WTC11 (cell line): ENCODE measurements at regions of chr1 and their contacts with region 1.

Region 1: DNA sequence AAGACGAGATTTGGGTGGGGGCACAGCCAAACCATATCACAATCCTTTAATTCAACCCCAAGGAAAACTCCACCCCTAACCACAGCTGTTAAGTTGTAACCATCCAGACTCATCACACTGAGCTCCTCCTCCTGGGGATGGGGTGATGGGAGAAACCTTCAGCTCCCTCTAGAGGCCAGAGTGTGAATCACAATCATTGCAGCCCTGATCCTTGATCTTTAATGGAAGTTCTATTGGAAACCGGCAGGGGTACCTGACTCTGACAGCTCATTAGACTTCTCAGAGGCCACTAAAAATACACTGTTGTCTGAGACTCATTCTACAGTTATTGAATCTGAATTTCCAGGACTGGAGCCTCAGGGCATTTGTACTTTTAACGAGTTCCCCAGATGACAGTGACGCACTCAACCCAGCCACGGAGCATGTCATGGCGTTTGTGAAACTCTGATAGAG is 127.2 kb downstream of the IGSF21 start:
- DNase-seq: peak; percentile 77
- ATAC-seq: peak; percentile 82
- H3K4me3 Mint-ChIP-seq: no peak overlapping the region
- H3K27ac Mint-ChIP-seq: peak overlapping the region; percentile 86
- H3K4me1 Mint-ChIP-seq: peaks cover 78% of the 10 kb centered on the region
- H3K27me3 Mint-ChIP-seq: no peaks in the 10 kb centered on the region; the same call in 1 of the 2 replicates
- CTCF ChIP-seq: peak; percentile 73; the same call in 1 of the 2 replicates

Region 2: GRCh38 chr1:18079941-18080520 is 154.8 kb before region 1 on chr1:
- CTCF ChIA-PET with region 1: no interaction called
- POLR2A ChIA-PET with region 1: no interaction called
- DNase-seq: no peak
- ATAC-seq: no peak
- H3K4me3 Mint-ChIP-seq: no peak overlapping the region
- H3K27ac Mint-ChIP-seq: no peak overlapping the region
- H3K4me1 Mint-ChIP-seq: peaks cover 19% of the 10 kb centered on the region
- H3K27me3 Mint-ChIP-seq: peaks cover 3% of the 10 kb centered on the region
- CTCF ChIP-seq: no peak

Region 3: DNA sequence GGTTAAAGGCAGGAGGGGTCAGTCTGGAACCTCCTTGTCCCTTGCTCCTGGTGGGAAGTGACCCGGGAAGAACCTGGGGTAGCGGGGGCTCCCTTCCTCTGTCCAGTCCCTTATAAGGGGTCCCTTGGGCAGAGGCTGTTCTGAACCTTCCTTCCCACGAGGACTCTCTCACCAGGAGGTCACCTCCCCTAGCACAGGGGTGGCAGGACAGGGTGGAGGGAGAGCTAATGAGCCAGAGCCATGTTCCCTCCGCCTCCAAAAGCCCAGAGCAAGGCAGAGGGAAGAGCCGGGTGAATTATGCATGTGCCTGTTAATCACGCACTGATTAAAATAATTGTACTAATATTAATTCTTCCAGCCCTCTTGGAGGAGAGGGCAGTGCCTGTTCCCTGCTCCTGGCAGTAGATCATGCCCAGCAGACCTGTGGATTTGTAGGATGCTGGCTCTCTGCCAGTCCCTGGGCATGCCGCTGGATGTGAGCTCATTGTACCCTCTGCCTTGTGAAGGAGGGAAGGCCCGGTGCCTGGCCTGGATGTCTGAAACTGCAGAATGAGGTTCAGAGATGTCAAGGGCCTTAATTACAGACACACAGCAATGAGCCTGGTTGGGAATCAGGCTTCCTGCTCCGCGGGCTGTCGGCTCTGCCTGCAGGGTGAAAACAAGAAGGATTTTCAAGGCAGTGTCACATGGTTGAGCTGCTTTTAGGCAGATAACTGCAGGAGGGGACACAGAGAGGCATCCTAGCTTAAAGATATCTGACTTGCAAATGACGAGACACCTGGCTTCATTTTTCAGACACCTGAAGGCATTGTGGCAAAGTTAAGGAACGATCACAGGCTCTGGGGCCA is 59.1 kb before region 1 on chr1:
- CTCF ChIA-PET with region 1: interaction called, 21 read pairs
- POLR2A ChIA-PET with region 1: no interaction called
- DNase-seq: peak; percentile 30
- ATAC-seq: peak; percentile 74
- H3K4me3 Mint-ChIP-seq: no peak overlapping the region
- H3K27ac Mint-ChIP-seq: peak overlapping the region; percentile 93
- H3K4me1 Mint-ChIP-seq: peaks cover 55% of the 10 kb centered on the region
- H3K27me3 Mint-ChIP-seq: no peaks in the 10 kb centered on the region
- CTCF ChIP-seq: no peak

Region 4: DNA sequence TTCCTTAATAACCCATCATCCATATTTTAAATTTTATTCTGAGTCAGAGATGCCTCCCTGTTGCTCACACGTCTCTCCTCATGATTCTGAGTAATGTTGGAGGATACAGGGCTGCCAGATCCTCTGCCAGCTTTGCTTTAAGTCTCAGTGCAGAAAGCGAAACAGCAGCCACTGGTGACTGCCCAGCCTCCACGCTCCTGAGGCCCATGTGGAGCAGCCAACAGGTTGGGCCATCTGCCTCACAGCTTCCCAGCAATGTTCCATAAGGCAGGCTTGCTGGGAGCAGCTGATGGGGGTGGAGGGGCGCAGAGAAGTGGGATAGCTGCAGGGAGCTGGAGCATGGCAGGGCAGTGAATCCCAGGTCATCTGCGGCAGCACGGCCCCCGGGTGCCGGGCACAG is 23.1 kb before region 1 on chr1:
- CTCF ChIA-PET with region 1: interaction called, 21 read pairs
- POLR2A ChIA-PET with region 1: no interaction called
- DNase-seq: no peak
- ATAC-seq: no peak
- H3K4me3 Mint-ChIP-seq: no peak overlapping the region
- H3K27ac Mint-ChIP-seq: peak overlapping the region; percentile 45; the same call in 1 of the 2 replicates
- H3K4me1 Mint-ChIP-seq: peaks cover 44% of the 10 kb centered on the region
- H3K27me3 Mint-ChIP-seq: no peaks in the 10 kb centered on the region
- CTCF ChIP-seq: no peak

Region 5: DNA sequence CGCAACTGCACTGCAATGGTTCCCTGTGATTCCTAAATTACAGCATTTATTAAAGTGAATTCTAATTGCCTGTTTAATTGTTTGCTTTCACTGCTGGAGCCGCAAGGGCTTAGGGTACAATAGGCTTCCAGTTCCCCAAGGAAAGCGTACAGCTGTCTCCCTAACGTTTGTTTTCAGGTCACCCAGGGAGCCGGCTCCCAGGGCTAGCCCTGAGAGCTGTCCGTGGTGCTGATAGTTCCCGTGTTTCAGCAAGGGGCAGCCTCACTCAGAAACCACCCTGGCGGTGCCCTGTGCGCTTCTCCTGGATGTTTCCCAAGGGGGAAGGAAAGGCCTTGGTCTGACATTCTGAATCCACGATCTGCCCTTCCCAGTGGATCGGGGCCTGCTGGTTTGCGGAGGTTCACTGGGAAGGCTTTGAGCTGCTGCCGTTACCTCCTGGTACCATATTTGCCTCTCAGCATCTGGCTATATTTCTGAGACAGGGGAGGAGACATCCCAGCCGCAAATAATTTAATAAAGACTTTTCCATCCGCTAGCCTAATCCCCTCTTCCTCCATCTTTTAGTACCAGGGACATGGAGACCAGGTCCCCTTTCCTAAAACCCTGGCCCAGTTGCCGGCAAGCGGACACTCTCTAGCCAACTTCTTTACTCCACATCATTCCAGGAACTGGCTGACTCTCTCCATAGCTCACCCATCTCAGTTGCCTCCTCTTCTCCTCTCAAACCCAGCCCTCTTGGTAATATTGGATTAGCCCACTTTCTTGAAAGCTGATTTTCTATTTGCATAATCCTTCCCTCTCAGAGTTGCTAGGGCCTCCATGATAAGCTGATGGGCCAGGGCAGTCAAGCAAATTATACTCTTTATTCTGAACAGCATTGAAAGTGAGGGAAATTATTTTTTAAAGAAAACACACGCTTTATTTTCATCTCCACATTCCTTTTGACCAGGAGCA is 21.7 kb after region 1 on chr1:
- CTCF ChIA-PET with region 1: interaction called, 21 read pairs
- POLR2A ChIA-PET with region 1: no interaction called
- DNase-seq: peak; percentile 93
- ATAC-seq: peak; percentile 96
- H3K4me3 Mint-ChIP-seq: no peak overlapping the region
- H3K27ac Mint-ChIP-seq: no peak overlapping the region
- H3K4me1 Mint-ChIP-seq: peaks cover 9% of the 10 kb centered on the region
- H3K27me3 Mint-ChIP-seq: peaks cover 3% of the 10 kb centered on the region
- CTCF ChIP-seq: no peak

Region 6: GRCh38 chr1:18290740-18291412 is 56.1 kb after region 1 on chr1:
- CTCF ChIA-PET with region 1: interaction called, 28 read pairs
- POLR2A ChIA-PET with region 1: interaction called, 3 read pairs
- DNase-seq: peak; percentile 30
- ATAC-seq: peak; percentile 24
- H3K4me3 Mint-ChIP-seq: no peak overlapping the region
- H3K27ac Mint-ChIP-seq: peak overlapping the region; percentile 93
- H3K4me1 Mint-ChIP-seq: peaks cover 88% of the 10 kb centered on the region
- H3K27me3 Mint-ChIP-seq: no peaks in the 10 kb centered on the region; the same call in 1 of the 2 replicates
- CTCF ChIP-seq: no peak

Region 7: GRCh38 chr1:18581420-18581880 is 346.6 kb after region 1 on chr1:
- CTCF ChIA-PET with region 1: interaction called, 14 read pairs
- POLR2A ChIA-PET with region 1: no interaction called
- DNase-seq: peak; percentile 81
- ATAC-seq: peak; percentile 83
- H3K4me3 Mint-ChIP-seq: no peak overlapping the region
- H3K27ac Mint-ChIP-seq: no peak overlapping the region
- H3K4me1 Mint-ChIP-seq: no peaks in the 10 kb centered on the region
- H3K27me3 Mint-ChIP-seq: peaks cover 5% of the 10 kb centered on the region
- CTCF ChIP-seq: peak; percentile 89

Region 8: DNA sequence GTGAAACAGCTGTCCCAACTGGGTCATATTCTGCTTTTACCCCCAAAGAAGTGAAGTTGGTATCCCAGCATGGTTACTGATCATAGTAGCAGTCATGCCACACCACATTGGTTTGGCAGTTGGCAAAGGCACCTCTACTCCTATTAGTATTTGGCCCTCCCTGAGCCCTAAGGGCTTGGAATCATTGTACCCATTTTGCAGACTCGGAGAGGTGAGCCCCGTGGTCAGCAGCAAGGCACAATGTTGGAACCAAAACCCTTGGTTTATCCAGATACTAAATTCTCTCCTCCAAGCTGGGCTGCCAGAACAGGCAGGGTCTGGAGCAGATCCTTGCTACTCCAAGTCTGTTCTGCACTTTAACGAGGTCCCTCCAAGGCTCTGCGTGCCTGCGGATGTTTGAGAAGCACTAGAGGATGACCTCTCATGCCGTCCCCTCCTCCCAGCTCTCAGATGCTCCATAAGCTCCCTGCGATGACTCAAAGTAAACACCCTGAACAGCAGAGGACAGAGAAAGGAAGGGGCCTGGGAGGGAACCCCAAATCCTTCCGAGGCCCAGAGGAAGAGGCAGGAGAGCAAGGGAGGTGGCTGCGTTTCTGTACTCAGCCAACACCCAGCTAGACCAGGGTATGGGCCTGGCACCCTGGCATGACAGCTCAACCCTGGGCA is 485.1 kb after region 1 on chr1:
- CTCF ChIA-PET with region 1: no interaction called
- POLR2A ChIA-PET with region 1: no interaction called
- DNase-seq: no peak
- ATAC-seq: no peak
- H3K4me3 Mint-ChIP-seq: no peak overlapping the region
- H3K27ac Mint-ChIP-seq: no peak overlapping the region
- H3K4me1 Mint-ChIP-seq: peaks cover 18% of the 10 kb centered on the region
- H3K27me3 Mint-ChIP-seq: peaks cover 71% of the 10 kb centered on the region
- CTCF ChIP-seq: no peak